ENCODE measurements at regions of chr15 and their contacts with region 1.

Region 1: DNA sequence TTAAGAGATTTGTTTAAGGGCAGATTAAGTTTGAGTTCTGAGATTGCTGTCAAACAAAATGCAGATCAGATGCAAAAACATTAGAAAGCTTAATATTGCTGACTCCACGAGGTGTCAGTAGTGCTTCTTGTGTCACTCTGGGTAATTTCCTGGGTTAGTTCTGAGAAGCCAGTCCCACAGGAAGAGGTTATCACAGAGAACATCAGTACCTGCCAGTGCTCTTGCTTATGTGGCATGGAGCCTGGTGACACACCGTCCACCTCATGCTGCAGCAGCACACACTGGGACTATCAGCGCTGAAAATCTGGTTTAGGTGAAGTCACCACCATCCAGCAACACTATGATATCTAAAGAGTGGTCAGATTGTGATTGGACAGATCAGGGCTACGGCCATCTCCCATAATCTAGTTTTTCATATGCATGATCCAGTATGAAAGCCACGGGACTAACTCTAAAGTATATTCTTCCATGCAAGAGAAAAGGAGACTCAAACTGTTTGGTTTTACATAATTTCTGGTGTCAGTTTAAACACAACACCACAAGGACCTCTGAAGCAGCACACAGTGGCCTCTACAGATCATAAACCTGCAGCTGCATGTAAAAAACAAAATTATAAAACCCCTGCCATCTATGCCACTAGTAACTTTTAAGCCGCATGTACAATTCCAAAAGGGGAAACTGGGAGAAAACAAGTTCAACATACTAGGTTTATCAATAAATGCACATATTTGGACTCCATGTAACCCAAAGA is 36.1 kb upstream of the MYO5C start:
- DNase-seq: no peak
- ATAC-seq: peak; percentile 71 to 91 (median 83)
- H3K4me3 ChIP-seq: no peak overlapping the region
- H3K27ac ChIP-seq: no peak overlapping the region
- H3K4me1 ChIP-seq: peaks cover 9% of the 10 kb centered on the region
- H3K27me3 ChIP-seq: no peaks in the 10 kb centered on the region
- CTCF ChIP-seq: peak; percentile 30

Region 2: DNA sequence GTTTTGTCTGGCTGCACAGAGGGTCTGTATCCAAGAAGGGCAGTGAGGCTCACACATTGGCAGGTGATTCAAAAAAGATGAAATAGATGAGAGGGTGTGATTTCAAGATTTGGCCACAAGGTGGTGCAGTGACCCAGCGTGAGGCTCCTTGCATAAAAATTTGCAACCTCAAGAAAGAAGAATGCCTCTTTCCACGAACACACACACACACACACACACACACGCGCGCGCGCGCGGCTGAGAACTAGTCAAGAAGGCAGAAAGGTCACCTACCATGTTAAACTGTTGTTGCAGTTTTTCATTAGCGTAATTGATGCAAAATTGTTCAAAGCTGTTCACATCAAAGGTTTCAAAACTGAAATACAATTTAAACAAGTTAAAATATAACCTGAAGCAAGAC is 75.3 kb before region 1 on chr15:
- intact Hi-C with region 1: loop called in 1 of 2 experiments (anchors 10 kb)
- DNase-seq: peak; percentile 55 to 75
- ATAC-seq: peak; percentile 52 to 66 (median 58)
- H3K4me3 ChIP-seq: peak overlapping the region; percentile 20
- H3K27ac ChIP-seq: no peak overlapping the region
- H3K4me1 ChIP-seq: peaks cover 16% of the 10 kb centered on the region
- H3K27me3 ChIP-seq: no peaks in the 10 kb centered on the region
- CTCF ChIP-seq: peak; percentile 70

Region 3: GRCh38 chr15:52295421-52296001 is 36.2 kb before region 1 on chr15 and contains the start of gene MYO5C:
- intact Hi-C with region 1: no loop called
- DNase-seq: peak; percentile 70 to 86
- ATAC-seq: peak; percentile 91 to 97 (median 96)
- H3K4me3 ChIP-seq: peak within 1 kb of the TSS; percentile 77
- H3K27ac ChIP-seq: peak within 1 kb of the TSS; percentile 23
- H3K4me1 ChIP-seq: no peaks in the 10 kb centered on the region
- H3K27me3 ChIP-seq: peaks cover 0 to 12% (median 2%) of the 10 kb centered on the region in 3 donors
- CTCF ChIP-seq: no peak
- total RNA-seq, gene MYO5C: 1.2 to 3.0 (median 2.2) TPM

Region 4: DNA sequence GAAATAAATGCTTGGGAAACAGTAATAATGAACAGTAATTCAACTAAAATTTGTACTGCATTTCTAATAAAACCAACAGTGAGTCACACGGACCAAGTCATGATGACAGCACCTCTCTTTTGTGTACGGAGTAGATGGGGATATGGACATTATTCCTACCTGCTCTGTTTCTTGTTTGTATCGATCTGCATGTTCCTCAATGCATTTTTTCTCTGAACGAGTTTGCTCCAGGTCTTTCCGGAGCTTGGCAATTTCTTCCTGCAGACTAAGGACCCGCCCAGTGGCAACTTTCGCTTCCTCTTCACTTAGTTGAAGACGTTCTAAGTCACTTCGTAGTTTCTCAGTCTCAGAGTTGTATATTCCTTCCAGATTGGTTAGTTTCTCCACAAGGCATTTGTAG is 38.3 kb after region 1 on chr15:
- intact Hi-C with region 1: no loop called
- DNase-seq: no peak
- ATAC-seq: peak; percentile 27 to 65 (median 44)
- H3K4me3 ChIP-seq: no peak overlapping the region
- H3K27ac ChIP-seq: peak overlapping the region; percentile 48
- H3K4me1 ChIP-seq: peaks cover 8% of the 10 kb centered on the region
- H3K27me3 ChIP-seq: no peaks in the 10 kb centered on the region
- CTCF ChIP-seq: no peak

Region 5: GRCh38 chr15:52405856-52406255 is 74.2 kb after region 1 on chr15:
- intact Hi-C with region 1: no loop called
- DNase-seq: no peak
- ATAC-seq: no peak
- H3K4me3 ChIP-seq: no peak overlapping the region
- H3K27ac ChIP-seq: no peak overlapping the region
- H3K4me1 ChIP-seq: no peaks in the 10 kb centered on the region
- H3K27me3 ChIP-seq: no peaks in the 10 kb centered on the region
- CTCF ChIP-seq: no peak

Region 6: DNA sequence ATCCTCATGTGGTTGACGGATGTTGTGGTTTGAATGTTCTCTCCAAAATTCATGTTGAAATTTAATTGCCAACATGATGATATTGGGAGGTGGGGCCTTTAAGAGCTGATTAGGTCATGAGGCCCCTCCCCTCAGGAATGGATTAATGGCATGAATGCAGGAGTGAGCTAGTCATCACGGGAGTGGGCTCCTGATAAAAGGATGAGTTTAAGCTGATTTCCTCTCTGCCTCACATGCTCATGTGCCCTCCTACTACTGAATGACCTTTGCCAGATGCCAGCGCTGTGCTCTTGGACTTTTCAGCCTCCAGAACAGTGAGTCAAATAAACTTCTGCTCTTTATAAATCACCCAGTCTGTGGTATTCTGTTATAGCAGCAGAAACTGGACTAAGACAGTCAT is 85.9 kb after region 1 on chr15:
- intact Hi-C with region 1: no loop called
- DNase-seq: no peak
- ATAC-seq: peak in 2 of 4 donors; percentile 33 to 37
- H3K4me3 ChIP-seq: no peak overlapping the region
- H3K27ac ChIP-seq: no peak overlapping the region
- H3K4me1 ChIP-seq: peaks cover 4% of the 10 kb centered on the region
- H3K27me3 ChIP-seq: no peaks in the 10 kb centered on the region
- CTCF ChIP-seq: no peak

Region 7: DNA sequence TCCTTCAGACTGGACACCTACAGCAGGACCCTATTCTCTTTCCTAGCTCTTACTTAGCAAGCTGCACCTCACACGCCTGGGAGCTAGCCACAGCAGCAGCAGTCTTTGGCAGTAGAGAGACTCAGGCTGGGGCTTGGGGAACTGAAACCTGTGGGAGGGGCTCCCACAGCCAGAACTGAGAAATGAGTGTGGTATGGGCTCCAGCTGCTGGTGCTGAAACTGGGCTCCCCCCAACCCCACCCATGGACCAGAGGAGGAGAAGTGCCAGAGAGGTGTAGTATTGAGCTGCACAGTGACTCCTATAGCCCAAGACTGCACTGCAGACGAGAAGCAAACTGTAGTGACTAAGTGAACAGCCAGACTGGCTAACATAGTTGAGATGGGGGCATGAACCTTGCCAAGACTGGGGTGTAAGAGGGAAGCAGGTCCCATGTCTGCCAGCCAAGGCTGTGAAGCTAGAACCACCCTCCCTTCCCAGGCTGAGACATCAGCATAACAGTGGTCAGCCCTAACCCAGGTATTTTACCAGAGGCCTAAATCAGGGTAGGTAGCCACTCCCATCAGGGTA is 134.6 kb after region 1 on chr15:
- intact Hi-C with region 1: loop called in 1 of 2 experiments (anchors 10 kb)
- DNase-seq: peak; percentile 37 to 62
- ATAC-seq: peak; percentile 32 to 45 (median 38)
- H3K4me3 ChIP-seq: no peak overlapping the region
- H3K27ac ChIP-seq: no peak overlapping the region
- H3K4me1 ChIP-seq: peaks cover 27% of the 10 kb centered on the region
- H3K27me3 ChIP-seq: no peaks in the 10 kb centered on the region
- CTCF ChIP-seq: no peak

Region 8: DNA sequence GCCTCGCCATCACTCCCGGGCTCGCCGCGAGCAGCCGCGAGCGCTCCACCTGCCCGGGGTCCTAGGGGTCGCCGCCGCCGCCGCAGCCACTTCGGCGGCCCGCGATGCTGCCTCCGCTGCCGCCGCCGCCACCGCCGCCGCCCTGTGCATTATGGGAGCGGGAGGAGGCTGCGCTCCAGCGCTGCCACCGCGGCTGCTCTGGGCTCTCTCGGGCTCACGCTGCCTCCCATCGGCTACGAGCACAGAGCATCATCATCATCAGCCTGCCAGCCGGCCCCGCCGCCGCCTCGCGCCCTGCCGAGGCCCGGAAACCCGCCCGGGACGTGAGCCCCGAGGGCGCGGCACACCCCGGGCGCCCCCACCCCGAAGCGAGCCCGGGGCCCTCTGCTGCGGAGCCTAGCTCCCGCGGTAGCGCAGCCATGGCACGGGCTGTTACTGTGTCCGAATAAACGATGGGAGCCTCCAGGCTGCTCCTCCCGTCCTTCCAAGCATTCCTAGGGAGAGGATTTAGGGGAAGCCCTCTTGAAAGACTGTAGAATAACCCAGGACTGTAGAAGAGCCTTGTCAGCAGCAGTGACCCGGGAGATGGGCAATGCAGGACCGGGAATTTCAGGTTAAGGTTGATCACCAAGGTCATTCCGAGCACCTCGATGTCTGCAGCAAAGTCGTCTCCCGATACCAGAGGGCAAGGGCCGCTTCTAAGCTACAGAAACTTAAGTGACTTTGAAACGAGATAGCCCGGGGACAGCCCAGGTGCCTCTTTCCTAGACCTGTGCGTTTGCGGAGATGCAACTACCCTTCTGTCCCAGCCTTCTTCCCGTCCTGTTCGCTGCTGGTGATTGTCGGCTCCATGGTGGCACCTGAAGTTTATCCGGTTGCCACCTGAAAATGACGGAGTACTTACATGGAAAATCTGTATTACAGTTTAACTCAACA is 197.6 kb after region 1 on chr15:
- intact Hi-C with region 1: loop called in 1 of 2 experiments (anchors 10 kb)
- DNase-seq: peak; percentile 80 to 89
- ATAC-seq: peak; percentile 77 to 87 (median 85)
- H3K4me3 ChIP-seq: peak overlapping the region; percentile 94
- H3K27ac ChIP-seq: peak overlapping the region; percentile 91
- H3K4me1 ChIP-seq: peaks cover 19% of the 10 kb centered on the region
- H3K27me3 ChIP-seq: no peaks in the 10 kb centered on the region
- CTCF ChIP-seq: no peak

Region 9: GRCh38 chr15:52730173-52730572 is 398.5 kb after region 1 on chr15:
- intact Hi-C with region 1: loop called in 1 of 2 experiments (anchors 5 kb)
- DNase-seq: no peak
- ATAC-seq: peak in 3 of 4 donors; percentile 45 to 69 (median 55)
- H3K4me3 ChIP-seq: no peak overlapping the region
- H3K27ac ChIP-seq: peak overlapping the region; percentile 78
- H3K4me1 ChIP-seq: peaks cover 42% of the 10 kb centered on the region
- H3K27me3 ChIP-seq: no peaks in the 10 kb centered on the region
- CTCF ChIP-seq: no peak

Measured in psoas muscle (tissue), 8 donors.